ENCODE measurements at regions of chr12 and their contacts with region 1.

Region 1: GRCh38 chr12:23704992-23705943 is 244.2 kb downstream of the SOX5 start:
- DNase-seq: no peak
- H3K4me3 Mint-ChIP-seq: no peak overlapping the region
- H3K27ac Mint-ChIP-seq: no peak overlapping the region
- H3K4me1 Mint-ChIP-seq: no peaks in the 10 kb centered on the region
- H3K27me3 Mint-ChIP-seq: no peaks in the 10 kb centered on the region
- CTCF ChIP-seq: no peak

Region 2: GRCh38 chr12:23640754-23641153 is 64.5 kb before region 1 on chr12:
- CTCF ChIA-PET with region 1: no interaction called
- intact Hi-C with region 1: no loop called
- DNase-seq: no peak
- H3K4me3 Mint-ChIP-seq: no peak overlapping the region
- H3K27ac Mint-ChIP-seq: no peak overlapping the region
- H3K4me1 Mint-ChIP-seq: no peaks in the 10 kb centered on the region
- H3K27me3 Mint-ChIP-seq: no peaks in the 10 kb centered on the region
- CTCF ChIP-seq: no peak

Region 3: DNA sequence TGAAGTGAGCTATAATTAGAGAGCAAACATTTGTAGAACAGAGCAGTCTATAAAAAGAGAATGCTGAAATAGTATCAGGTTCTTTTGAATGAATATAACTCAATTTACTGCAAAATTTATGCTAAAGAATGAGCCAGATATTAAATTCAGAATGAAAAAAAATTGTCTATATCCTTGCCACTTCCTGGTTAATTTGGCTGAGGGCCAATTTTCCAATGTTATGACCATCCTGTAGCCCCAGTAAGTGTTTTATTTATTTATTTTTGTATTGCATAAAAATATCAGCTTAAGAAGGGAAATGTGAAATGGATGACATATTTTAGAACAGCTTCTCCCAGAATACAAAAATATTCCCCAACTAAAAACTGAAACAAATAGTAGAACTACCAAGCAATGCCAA is 19.2 kb before region 1 on chr12:
- CTCF ChIA-PET with region 1: no interaction called
- intact Hi-C with region 1: loop called (anchors 1 kb)
- DNase-seq: no peak
- H3K4me3 Mint-ChIP-seq: no peak overlapping the region
- H3K27ac Mint-ChIP-seq: no peak overlapping the region
- H3K4me1 Mint-ChIP-seq: no peaks in the 10 kb centered on the region
- H3K27me3 Mint-ChIP-seq: no peaks in the 10 kb centered on the region
- CTCF ChIP-seq: no peak

Measured in Calu3 (cell line).